PC-9 (cell line): ENCODE measurements at regions of chr2 and their contacts with region 1.

Region 1: GRCh38 chr2:69493268-69493667 is 56.0 kb upstream of the NFU1 start:
- DNase-seq: no peak
- H3K4me3 ChIP-seq: no peak overlapping the region
- H3K27ac ChIP-seq: no peak overlapping the region
- H3K4me1 ChIP-seq: no peaks in the 10 kb centered on the region
- H3K27me3 ChIP-seq: no peaks in the 10 kb centered on the region
- CTCF ChIP-seq: no peak

Region 2: GRCh38 chr2:69538872-69539548 is 45.7 kb after region 1 on chr2:
- CTCF ChIA-PET with region 1: no interaction called
- POLR2A ChIA-PET with region 1: no interaction called
- intact Hi-C with region 1: no loop called
- DNase-seq: peak; percentile 11 to 58
- H3K4me3 ChIP-seq: no peak overlapping the region
- H3K27ac ChIP-seq: peak overlapping the region; percentile 62
- H3K4me1 ChIP-seq: peaks cover 38% of the 10 kb centered on the region
- H3K27me3 ChIP-seq: no peaks in the 10 kb centered on the region
- CTCF ChIP-seq: no peak

Region 3: GRCh38 chr2:70181363-70181956 is 688.2 kb after region 1 on chr2:
- CTCF ChIA-PET with region 1: interaction called, 10 read pairs
- POLR2A ChIA-PET with region 1: no interaction called
- intact Hi-C with region 1: no loop called
- DNase-seq: no peak
- H3K4me3 ChIP-seq: no peak overlapping the region
- H3K27ac ChIP-seq: no peak overlapping the region
- H3K4me1 ChIP-seq: no peaks in the 10 kb centered on the region
- H3K27me3 ChIP-seq: no peaks in the 10 kb centered on the region
- CTCF ChIP-seq: no peak